ENCODE measurements at regions of chr22 and their contacts with region 1.

Region 1: GRCh38 chr22:27170491-27170890 is 513.1 kb downstream of the MIAT start:
- DNase-seq: peak; percentile 60 to 94
- H3K4me3 ChIP-seq: no peak overlapping the region
- H3K27ac ChIP-seq: peak overlapping the region; percentile 53 to 55
- H3K4me1 ChIP-seq: peaks cover 0 to 9% of the 10 kb centered on the region in 2 donors
- H3K27me3 ChIP-seq: no peaks in the 10 kb centered on the region
- CTCF ChIP-seq: no peak

Region 2: DNA sequence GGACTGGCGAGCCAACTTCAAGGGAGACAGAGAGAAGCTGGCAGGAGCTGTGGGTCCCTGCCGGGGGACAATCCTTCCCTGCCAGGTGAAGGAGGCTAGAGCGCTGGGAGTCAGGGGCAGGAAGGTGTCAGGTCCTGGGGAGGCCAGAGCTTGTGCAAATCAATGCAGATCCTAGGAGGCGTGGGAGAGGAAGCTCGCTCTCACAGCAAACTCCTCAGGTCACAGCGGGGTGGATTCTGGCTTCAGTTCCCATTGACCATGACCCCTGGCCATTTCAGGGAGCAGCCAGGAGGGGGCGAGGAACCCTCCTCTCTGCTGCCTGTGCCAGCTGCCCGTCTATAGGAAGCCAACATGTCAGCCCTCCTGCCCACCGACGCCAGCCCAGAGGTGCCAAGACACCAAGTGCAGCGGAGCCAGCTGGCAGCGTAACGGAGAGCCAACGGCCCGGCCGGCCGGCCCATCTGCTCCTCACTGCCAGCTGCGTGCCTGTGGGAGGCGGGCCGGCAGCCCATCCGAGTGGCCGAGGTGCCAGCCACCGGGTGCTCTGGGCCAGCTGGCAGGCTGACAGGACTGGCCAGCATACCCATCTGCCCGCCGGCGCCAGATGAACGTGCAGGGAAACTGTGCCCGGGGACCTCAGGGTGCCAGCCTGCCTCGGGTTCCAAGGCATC is 138.3 kb before region 1 on chr22:
- intact Hi-C with region 1: loop called (anchors 5 kb)
- DNase-seq: peak in 1 of 2 donors; percentile 79
- H3K4me3 ChIP-seq: peak overlapping the region in 1 of 2 donors; percentile 35
- H3K27ac ChIP-seq: peak overlapping the region; percentile 67 to 76
- H3K4me1 ChIP-seq: peaks cover 2 to 18% of the 10 kb centered on the region in 2 donors
- H3K27me3 ChIP-seq: no peaks in the 10 kb centered on the region
- CTCF ChIP-seq: peak in 2 of 3 experiments; percentile 38 to 43

Region 3: GRCh38 chr22:27107824-27108223 is 62.7 kb before region 1 on chr22:
- intact Hi-C with region 1: loop called (anchors 1 kb)
- DNase-seq: peak; percentile 21 to 90
- H3K4me3 ChIP-seq: no peak overlapping the region
- H3K27ac ChIP-seq: peak overlapping the region; percentile 68 to 76
- H3K4me1 ChIP-seq: peaks cover 11 to 60% of the 10 kb centered on the region in 2 donors
- H3K27me3 ChIP-seq: no peaks in the 10 kb centered on the region
- CTCF ChIP-seq: no peak

Region 4: GRCh38 chr22:27150544-27150941 is 19.9 kb before region 1 on chr22:
- intact Hi-C with region 1: no loop called
- DNase-seq: no peak
- H3K4me3 ChIP-seq: no peak overlapping the region
- H3K27ac ChIP-seq: no peak overlapping the region
- H3K4me1 ChIP-seq: no peaks in the 10 kb centered on the region
- H3K27me3 ChIP-seq: no peaks in the 10 kb centered on the region
- CTCF ChIP-seq: no peak